Stomach (tissue), 19 donors: ENCODE measurements at regions of chr1 and their contacts with region 1.

Region 1: DNA sequence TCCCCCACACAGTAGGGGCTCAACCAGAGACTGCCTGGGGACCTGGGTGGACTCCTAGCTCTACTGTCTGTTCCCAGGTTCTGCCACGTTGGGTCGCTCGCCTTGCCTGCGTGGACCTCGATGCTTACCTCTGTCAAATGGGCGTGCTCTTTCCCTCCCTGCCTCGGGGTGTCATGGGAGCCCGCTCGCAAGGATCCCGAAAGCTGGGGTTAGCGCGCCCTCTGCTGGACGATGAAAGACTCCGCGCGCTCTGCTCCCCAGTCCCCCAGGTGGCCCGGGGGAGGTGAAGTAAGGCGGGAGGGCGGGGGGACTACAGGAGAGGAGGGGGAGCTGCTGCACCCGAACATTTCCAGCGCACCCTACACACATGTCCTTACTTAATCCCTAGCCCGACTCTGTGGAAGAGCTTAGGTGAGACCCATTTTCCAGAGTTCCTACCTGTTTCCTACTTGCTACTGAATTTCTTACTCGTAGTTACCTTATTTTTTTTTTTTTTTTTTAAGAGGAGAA is 2.3 kb upstream of the BSND start:
- DNase-seq: peak; percentile 80 to 89
- H3K4me3 ChIP-seq: peak overlapping the region; percentile 13 to 34 (median 20)
- H3K27ac ChIP-seq: no peak overlapping the region
- H3K4me1 ChIP-seq: peaks cover 7 to 12% (median 10%) of the 10 kb centered on the region in 4 donors
- H3K27me3 ChIP-seq: peaks cover 0 to 64% (median 27%) of the 10 kb centered on the region in 3 donors
- CTCF ChIP-seq: peak in 5 of 7 experiments; percentile 65 to 91 (median 79)
- EP300 ChIP-seq: no peak
- POLR2A ChIP-seq: no peak

Region 2: GRCh38 chr1:54944610-54945544 is 51.5 kb before region 1 on chr1:
- intact Hi-C with region 1: loop called (anchors 5 kb)
- DNase-seq: peak; percentile 81 to 89
- H3K4me3 ChIP-seq: no peak overlapping the region
- H3K27ac ChIP-seq: no peak overlapping the region
- H3K4me1 ChIP-seq: peaks cover 0 to 17% (median 6%) of the 10 kb centered on the region in 4 donors
- H3K27me3 ChIP-seq: no peaks in the 10 kb centered on the region
- CTCF ChIP-seq: peak in 5 of 7 experiments; percentile 52 to 77 (median 65)
- EP300 ChIP-seq: no peak
- POLR2A ChIP-seq: no peak